ENCODE measurements at regions of chr11 and their contacts with region 1.

Region 1: GRCh38 chr11:66222358-66223149 is 45.9 kb upstream of the RAB1B start:
- DNase-seq: peak; percentile 95
- H3K4me3 ChIP-seq: no peak overlapping the region
- H3K27ac ChIP-seq: peak overlapping the region in 1 of 4 donors; percentile 35
- H3K4me1 ChIP-seq: no peaks in the 10 kb centered on the region
- H3K27me3 ChIP-seq: no peaks in the 10 kb centered on the region
- CTCF ChIP-seq: peak; percentile 98 to 99 (median 99)
- EP300 ChIP-seq: no peak
- POLR2A ChIP-seq: no peak

Region 2: GRCh38 chr11:66282468-66283386 is 60.2 kb after region 1 on chr11:
- intact Hi-C with region 1: loop called (anchors 1 kb)
- DNase-seq: peak; percentile 98
- H3K4me3 ChIP-seq: no peak overlapping the region
- H3K27ac ChIP-seq: peak overlapping the region in 1 of 4 donors; percentile 18
- H3K4me1 ChIP-seq: peaks cover 0 to 41% (median 29%) of the 10 kb centered on the region in 4 donors
- H3K27me3 ChIP-seq: no peaks in the 10 kb centered on the region
- CTCF ChIP-seq: peak; percentile 90 to 98 (median 96)
- EP300 ChIP-seq: no peak
- POLR2A ChIP-seq: no peak